Activated CD4-positive, alpha-beta T cell treated with anti-CD3 and anti-CD28 coated beads for 36 hours (primary cell): ENCODE measurements at regions of chr12 and their contacts with region 1.

Region 1: DNA sequence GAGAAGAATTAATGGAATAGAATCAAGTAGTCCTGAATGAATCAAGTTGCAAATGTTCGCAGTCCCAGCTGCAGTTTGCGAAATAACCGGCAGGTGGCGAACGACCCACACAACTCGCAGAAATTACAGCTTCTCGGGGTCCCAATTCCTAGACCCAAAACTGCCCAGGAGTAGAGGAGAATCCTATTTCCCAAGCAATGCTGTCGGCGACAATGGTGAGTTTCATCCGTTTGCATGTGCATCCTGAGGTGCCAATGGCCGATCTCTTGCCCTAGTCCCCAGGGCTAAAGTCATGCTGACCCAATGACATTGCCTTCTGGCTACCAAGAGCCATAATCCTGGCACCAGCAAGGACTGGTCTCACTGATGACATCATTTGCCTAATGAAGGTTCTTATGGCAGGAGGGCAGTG is 8.5 kb upstream of the ASCL1 start:
- DNase-seq: peak; percentile 73
- ATAC-seq: no peak
- H3K4me3 Mint-ChIP-seq: no peak overlapping the region
- H3K27ac Mint-ChIP-seq: no peak overlapping the region
- H3K4me1 Mint-ChIP-seq: peaks cover 11% of the 10 kb centered on the region
- H3K27me3 Mint-ChIP-seq: peaks cover 49% of the 10 kb centered on the region

Region 2: DNA sequence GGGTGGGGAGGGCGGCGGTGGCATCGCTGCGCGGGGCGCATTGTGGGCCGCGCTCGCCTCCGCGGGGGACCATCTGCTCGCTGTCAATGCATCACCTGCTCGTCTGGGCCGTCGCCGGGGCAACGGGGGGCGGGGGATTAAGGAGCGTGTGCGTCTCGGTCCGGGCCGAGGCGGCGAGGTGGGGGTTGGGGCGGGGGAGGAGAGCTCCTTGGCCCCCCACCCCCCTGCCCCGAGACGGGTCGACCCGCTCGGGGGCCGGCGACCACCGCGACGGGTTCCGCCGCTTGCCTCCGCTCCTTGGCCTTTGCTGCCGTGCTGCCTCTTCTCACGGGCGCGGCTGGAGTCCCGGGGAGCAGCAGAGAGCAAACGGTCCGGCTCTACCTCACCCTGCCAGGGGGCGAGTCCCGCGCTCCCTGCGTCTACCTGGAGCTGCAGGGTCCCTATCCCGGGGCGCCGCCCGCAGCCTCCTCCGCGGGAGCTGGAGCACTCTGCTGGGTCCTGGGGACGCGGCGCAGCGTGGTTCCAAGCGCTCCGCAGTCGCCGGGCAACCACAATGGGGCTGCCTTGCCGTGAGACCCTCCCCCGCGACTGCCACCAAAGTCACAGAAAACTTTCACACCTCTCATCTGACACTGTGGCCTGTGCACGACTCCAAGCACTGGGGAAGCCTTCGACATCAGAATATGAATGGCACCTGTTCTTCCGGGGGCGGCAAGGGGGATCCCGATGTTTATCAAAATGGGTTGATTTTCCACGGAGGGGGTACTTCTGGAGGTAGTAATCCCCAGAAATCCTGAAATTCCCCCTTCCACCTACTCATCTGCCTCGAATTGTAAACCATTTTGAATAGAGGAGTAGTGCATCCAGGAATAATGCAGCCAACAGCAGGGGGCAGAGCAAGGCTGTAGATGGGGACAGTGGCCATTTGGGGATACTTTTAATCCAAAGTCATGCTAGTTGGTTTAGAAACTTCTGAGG is 546.8 kb after region 1 on chr12 and contains the start of gene C12orf42:
- CTCF ChIA-PET with region 1: interaction called, 3 read pairs
- POLR2A ChIA-PET with region 1: no interaction called
- intact Hi-C with region 1: loop called in 1 of 2 experiments (anchors 5 kb)
- DNase-seq: peak; percentile 67
- ATAC-seq: peak; percentile 47
- H3K4me3 Mint-ChIP-seq: peak within 1 kb of the TSS; percentile 58
- H3K27ac Mint-ChIP-seq: no peak within 1 kb of the TSS
- H3K4me1 Mint-ChIP-seq: peaks cover 23% of the 10 kb centered on the region
- H3K27me3 Mint-ChIP-seq: peaks cover 36% of the 10 kb centered on the region
- total RNA-seq, gene C12orf42: 0.23 TPM in 1 of 2 experiments, not detected in the other

Region 3: GRCh38 chr12:103503977-103504376 is 555.0 kb after region 1 on chr12:
- CTCF ChIA-PET with region 1: interaction called, 7 read pairs
- POLR2A ChIA-PET with region 1: no interaction called
- intact Hi-C with region 1: loop called (anchors 1 to 5 kb)
- DNase-seq: peak; percentile 71
- ATAC-seq: no peak
- H3K4me3 Mint-ChIP-seq: no peak overlapping the region
- H3K27ac Mint-ChIP-seq: no peak overlapping the region
- H3K4me1 Mint-ChIP-seq: peaks cover 20% of the 10 kb centered on the region
- H3K27me3 Mint-ChIP-seq: peaks cover 5% of the 10 kb centered on the region

Region 4: GRCh38 chr12:103548622-103549601 is 600.0 kb after region 1 on chr12:
- CTCF ChIA-PET with region 1: interaction called, 52 read pairs
- POLR2A ChIA-PET with region 1: no interaction called
- intact Hi-C with region 1: loop called (anchors 1 kb)
- DNase-seq: peak; percentile 85
- ATAC-seq: peak; percentile 79
- H3K4me3 Mint-ChIP-seq: no peak overlapping the region
- H3K27ac Mint-ChIP-seq: no peak overlapping the region
- H3K4me1 Mint-ChIP-seq: peaks cover 5% of the 10 kb centered on the region
- H3K27me3 Mint-ChIP-seq: peaks cover 17% of the 10 kb centered on the region

Region 5: DNA sequence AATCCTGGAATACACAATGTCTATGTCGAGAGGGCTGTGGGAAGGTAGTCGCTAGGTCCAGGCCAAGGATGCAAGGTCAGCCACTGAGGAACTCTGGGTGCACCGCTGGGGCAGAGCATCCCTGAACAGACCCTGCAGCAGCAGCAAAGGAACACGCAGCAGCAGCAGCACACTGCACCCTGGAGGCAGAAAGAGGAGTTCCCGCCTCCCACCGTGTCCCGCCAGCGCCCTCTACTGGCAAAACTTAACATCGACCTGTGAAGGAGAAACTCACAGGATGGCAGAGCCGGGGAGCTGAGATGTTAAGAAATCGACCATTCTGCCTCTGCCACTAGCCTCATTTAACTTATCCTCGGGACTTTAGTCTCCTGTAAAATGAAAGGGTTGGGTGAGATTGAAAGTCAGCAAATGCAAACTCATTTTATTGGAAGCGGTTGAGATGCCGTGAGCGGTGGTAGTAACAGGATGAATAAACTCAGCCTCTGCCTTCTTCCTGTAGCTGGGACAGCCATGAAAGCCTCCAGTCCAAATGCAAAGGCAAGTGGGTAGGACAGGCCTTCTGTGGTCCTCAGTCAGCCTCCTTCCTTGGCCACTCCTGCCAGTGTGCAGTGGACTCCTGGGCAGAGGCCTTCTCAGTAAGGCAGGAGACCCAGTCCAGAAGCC is 683.7 kb after region 1 on chr12:
- CTCF ChIA-PET with region 1: no interaction called
- POLR2A ChIA-PET with region 1: no interaction called
- intact Hi-C with region 1: loop called in 1 of 2 experiments (anchors 2 kb)
- DNase-seq: peak; percentile 82
- ATAC-seq: peak; percentile 69
- H3K4me3 Mint-ChIP-seq: no peak overlapping the region
- H3K27ac Mint-ChIP-seq: no peak overlapping the region
- H3K4me1 Mint-ChIP-seq: no peaks in the 10 kb centered on the region
- H3K27me3 Mint-ChIP-seq: no peaks in the 10 kb centered on the region